Posterior vena cava (tissue), 2 donors: ENCODE measurements at regions of chr10 and their contacts with region 1.

Region 1: DNA sequence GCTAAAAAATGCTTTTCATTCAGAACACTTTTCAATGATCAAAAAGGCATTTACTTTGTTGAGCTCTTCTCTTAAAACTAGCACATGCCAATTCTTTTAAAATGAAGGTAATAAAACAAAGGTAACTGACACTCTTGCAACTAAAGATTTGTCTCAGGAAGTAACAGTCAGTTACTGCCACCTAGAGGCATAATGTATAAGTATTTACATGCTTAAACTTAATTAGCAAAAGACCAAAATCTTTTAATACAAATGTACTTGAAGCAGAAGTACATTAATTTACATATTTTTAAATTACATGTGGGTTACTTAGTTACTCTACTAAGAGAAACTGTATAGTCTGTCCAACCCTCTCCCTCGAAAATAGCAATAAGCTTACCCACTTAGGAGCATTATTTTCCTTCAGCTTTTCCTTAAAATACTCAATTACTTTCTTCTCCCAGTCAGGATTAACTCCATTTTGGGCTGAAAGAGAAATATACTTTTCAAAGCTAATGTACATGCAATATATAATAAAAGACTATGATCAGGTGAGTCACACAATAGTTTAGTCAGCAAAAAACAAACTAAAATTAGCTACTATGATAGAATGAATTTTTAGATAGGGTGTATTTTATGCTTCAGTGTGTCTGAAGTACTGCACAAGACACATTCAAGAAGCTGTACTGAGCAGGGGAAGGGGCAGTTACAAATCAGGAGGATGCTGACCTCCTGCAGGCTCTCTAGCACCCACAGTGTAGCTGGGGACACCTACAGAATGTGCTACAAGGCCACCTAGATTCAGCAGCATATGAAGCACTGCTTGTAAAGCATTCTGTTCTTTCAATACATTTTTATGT is 13.0 kb downstream of the MCMBP start:
- DNase-seq: no peak

Region 2: DNA sequence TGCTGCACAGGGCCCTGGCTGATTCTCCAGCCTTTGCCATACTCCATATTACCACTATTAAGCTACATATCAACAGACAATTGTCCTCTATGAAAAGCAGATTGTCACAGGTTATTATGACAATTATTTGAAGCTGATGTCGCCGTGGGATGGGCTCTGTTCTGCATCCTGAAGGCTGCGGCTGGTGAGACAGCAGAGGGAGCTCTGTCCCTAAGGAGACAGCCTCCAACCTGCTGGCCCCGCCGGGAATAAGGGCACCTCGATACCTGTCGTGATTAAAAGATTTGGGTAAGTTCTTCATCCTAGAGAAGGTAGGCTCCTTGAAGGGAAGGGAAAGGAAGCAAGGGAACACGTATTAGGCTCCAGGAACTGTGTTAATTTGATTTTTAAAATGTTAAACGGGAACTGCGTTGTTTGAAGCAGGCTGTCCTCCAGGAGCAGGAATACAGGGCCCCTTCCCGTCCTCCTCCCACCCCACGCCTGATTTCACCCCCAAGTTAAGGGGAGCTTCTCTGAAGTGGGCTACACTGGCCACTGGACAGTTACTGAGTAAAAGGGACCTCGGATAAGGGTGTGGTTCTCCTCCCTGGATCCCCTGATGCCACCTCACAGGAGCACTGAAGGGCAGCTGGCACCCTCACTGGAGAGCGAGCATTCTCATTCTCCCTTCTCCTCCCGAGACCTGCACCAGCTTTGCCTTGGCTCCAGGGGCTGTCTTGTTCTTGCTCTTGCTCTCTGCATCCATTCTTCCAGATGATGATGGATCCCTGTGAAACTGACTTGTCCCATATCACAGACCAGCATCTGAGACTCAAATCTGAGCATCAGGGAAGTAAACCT is 251.1 kb before region 1 on chr10:
- intact Hi-C with region 1: loop called in 1 of 2 experiments (anchors 10 kb)
- DNase-seq: no peak

Region 3: GRCh38 chr10:119686439-119687191 is 173.0 kb before region 1 on chr10:
- intact Hi-C with region 1: loop called (anchors 10 kb)
- DNase-seq: peak; percentile 94

Region 4: GRCh38 chr10:119742947-119743648 is 116.5 kb before region 1 on chr10:
- intact Hi-C with region 1: loop called in 1 of 2 experiments (anchors 10 kb)
- DNase-seq: no peak

Region 5: GRCh38 chr10:119750391-119751230 is 109.0 kb before region 1 on chr10:
- intact Hi-C with region 1: loop called (anchors 10 kb)
- DNase-seq: peak; percentile 82

Region 6: GRCh38 chr10:119807960-119808697 is 51.5 kb before region 1 on chr10:
- intact Hi-C with region 1: no loop called
- DNase-seq: no peak